Activated naive CD4-positive, alpha-beta T cell treated with anti-CD3 and anti-CD28 coated beads for 36 hours (primary cell): ENCODE measurements at regions of chr7 and their contacts with region 1.

Region 1: GRCh38 chr7:104883718-104884452 is 130.1 kb upstream of the KMT2E start:
- DNase-seq: peak; percentile 89
- H3K4me3 Mint-ChIP-seq: no peak overlapping the region
- H3K27ac Mint-ChIP-seq: no peak overlapping the region
- H3K4me1 Mint-ChIP-seq: peaks cover 9% of the 10 kb centered on the region
- H3K27me3 Mint-ChIP-seq: no peaks in the 10 kb centered on the region

Region 2: GRCh38 chr7:104552102-104552501 is 331.8 kb before region 1 on chr7:
- CTCF ChIA-PET with region 1: no interaction called
- intact Hi-C with region 1: no loop called
- DNase-seq: peak; percentile 60
- H3K4me3 Mint-ChIP-seq: no peak overlapping the region
- H3K27ac Mint-ChIP-seq: no peak overlapping the region
- H3K4me1 Mint-ChIP-seq: no peaks in the 10 kb centered on the region
- H3K27me3 Mint-ChIP-seq: peaks cover 1% of the 10 kb centered on the region

Region 3: DNA sequence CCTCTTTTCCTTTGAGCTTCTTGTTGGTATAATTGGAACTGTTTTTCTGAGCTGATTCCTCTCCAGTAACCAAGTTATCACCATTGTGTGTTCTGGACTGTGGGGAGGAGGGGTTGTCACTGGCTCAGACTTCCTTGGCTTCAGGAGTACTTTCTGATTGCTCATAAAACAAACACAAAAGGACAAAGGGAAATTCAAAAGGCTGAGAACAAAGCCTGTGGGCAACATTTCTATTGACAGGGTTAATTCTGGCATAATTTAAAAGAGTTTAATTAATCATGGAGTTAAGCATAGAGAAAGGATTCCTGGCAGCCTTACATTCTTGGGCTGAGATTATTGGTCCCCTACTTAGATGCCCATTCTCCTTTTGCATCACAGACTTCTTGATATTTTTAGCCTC is 92.8 kb before region 1 on chr7:
- CTCF ChIA-PET with region 1: no interaction called
- intact Hi-C with region 1: no loop called
- DNase-seq: no peak
- H3K4me3 Mint-ChIP-seq: no peak overlapping the region
- H3K27ac Mint-ChIP-seq: no peak overlapping the region
- H3K4me1 Mint-ChIP-seq: no peaks in the 10 kb centered on the region
- H3K27me3 Mint-ChIP-seq: peaks cover 15% of the 10 kb centered on the region

Region 4: DNA sequence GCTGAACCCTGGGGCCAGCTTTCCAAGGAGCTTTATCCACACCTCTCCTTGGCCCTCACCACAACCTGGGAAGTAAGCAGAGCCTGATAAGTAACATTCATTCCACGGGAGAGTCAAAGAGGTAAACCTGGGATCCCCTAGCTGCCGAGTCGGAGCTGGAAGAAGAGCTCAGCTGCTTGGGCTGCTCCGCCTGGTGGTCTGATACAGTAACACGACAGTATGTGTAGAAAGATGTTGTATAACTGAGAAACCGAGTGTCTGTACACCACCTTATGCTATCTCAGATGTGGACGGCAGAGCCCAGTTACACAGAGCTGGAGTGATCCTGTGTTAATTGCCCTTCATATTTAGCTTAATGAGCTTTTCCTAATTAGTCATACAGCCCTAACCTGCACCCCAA is 21.2 kb before region 1 on chr7:
- CTCF ChIA-PET with region 1: interaction called, 18 read pairs
- intact Hi-C with region 1: no loop called
- DNase-seq: no peak
- H3K4me3 Mint-ChIP-seq: no peak overlapping the region
- H3K27ac Mint-ChIP-seq: no peak overlapping the region
- H3K4me1 Mint-ChIP-seq: peaks cover 10% of the 10 kb centered on the region
- H3K27me3 Mint-ChIP-seq: peaks cover 3% of the 10 kb centered on the region

Region 5: DNA sequence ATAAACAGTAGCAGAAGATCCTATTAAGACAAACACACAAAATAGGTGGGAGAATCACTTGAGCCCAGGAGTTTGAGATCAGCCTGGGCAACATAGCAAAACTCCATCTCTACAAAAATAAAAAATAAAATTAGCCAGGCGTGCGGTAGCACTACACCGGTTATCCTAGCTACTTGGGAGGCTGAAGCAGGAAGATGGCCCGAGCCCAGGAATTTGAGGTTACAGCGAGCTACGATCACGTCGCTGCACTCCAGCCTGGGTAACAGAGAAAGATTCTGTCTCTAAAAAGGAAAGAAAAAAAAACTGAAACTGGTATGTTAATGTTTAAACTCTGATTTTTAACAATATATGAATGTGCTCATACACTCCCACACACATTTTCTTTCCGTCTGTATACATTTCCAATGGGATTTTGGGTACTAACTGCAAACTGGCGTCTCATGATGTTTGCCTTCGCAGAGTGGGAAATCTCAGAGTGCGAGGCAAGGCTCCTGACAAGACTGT is 10.5 kb before region 1 on chr7:
- CTCF ChIA-PET with region 1: interaction called, 32 read pairs
- intact Hi-C with region 1: no loop called
- DNase-seq: no peak
- H3K4me3 Mint-ChIP-seq: no peak overlapping the region
- H3K27ac Mint-ChIP-seq: no peak overlapping the region
- H3K4me1 Mint-ChIP-seq: peaks cover 7% of the 10 kb centered on the region
- H3K27me3 Mint-ChIP-seq: no peaks in the 10 kb centered on the region

Region 6: DNA sequence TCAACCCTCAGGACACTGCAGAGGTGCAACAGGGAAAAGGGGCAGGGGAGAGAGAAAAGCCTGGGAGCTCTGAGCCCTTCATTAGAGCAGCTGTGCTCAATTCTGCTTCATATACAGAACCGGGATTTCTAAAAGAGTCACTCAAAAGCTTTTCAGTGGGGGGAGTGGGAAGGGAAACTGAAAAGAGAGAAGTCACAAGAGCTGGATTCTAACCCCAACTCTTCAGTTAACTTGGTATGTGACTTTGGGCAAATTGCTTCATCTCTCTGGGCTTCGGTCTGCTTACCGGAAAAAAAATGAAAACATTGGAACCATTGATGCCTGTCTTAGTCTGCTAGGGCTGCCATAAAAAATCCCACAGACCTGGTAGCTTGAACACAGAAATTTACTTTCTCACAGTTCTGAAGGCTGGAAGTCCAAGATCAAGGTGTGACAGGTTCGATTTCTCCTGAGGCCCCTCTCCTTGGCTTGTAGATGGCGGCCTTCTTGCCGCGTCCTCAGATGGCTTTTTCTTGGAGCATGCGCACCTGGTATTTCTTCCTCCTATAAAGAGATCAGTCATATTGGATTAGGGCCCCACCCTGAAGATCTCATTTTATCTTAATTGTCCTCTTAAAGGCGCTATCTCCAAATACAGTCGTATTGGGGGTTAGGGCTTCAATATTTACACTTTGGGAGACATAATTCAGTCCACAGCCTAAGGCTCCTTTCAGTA is 11.8 kb after region 1 on chr7:
- CTCF ChIA-PET with region 1: interaction called, 39 read pairs
- intact Hi-C with region 1: no loop called
- DNase-seq: no peak
- H3K4me3 Mint-ChIP-seq: no peak overlapping the region
- H3K27ac Mint-ChIP-seq: no peak overlapping the region
- H3K4me1 Mint-ChIP-seq: peaks cover 4% of the 10 kb centered on the region
- H3K27me3 Mint-ChIP-seq: no peaks in the 10 kb centered on the region

Region 7: DNA sequence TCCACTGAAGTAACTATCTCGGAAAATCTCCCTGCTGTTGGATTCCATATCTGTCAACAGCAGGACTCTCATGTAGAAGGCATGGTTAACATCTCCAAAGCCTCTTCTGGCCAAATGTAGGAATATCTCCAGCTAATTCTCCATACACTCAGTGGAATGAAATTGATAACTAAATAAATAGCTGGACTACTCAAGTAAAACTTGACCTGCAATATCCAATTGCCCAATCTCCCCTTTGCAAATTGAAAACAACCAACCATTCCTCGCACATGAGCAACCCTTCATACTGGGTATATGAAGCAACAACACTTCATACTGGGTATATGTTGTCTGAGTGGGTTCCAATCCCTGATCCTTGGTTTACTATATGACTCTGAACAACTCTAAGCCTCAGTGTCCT is 24.8 kb after region 1 on chr7:
- CTCF ChIA-PET with region 1: interaction called, 123 read pairs
- intact Hi-C with region 1: no loop called
- DNase-seq: no peak
- H3K4me3 Mint-ChIP-seq: no peak overlapping the region
- H3K27ac Mint-ChIP-seq: no peak overlapping the region
- H3K4me1 Mint-ChIP-seq: no peaks in the 10 kb centered on the region
- H3K27me3 Mint-ChIP-seq: no peaks in the 10 kb centered on the region

Region 8: GRCh38 chr7:104914421-104914820 is 30.5 kb after region 1 on chr7:
- CTCF ChIA-PET with region 1: interaction called, 123 read pairs
- intact Hi-C with region 1: loop called (anchors 1 kb)
- DNase-seq: no peak
- H3K4me3 Mint-ChIP-seq: no peak overlapping the region
- H3K27ac Mint-ChIP-seq: no peak overlapping the region
- H3K4me1 Mint-ChIP-seq: no peaks in the 10 kb centered on the region
- H3K27me3 Mint-ChIP-seq: no peaks in the 10 kb centered on the region

Region 9: DNA sequence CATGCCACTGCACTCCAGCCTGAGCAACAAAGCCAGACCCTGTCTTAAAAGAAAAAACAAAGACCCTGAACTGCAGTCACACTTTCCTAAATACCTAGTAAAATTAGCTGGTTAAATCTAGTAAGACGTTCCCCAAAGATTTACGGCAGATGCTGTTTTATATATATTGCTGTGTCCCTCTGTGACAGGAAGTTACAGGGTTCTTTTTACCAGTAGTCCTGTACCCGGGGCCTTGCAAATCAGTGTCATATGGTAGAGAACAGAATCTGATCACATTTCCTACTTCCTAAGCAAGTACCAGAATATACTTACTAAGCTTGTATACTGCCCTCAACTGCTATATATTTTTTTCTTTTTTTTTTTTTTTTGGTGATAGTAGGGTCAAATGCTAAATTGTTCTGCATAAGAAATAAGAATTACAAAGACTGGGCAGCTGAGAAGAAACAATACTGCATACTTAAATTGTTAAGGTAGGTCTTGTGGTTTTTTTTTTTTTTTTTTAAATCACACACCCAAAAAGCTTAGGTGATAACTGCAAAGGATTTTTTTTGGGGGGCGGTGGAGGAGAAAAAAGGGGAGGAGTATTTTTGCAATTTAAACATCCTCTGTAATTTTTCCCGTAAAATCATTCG is 102.9 kb after region 1 on chr7:
- CTCF ChIA-PET with region 1: no interaction called
- intact Hi-C with region 1: no loop called
- DNase-seq: no peak
- H3K4me3 Mint-ChIP-seq: no peak overlapping the region
- H3K27ac Mint-ChIP-seq: no peak overlapping the region
- H3K4me1 Mint-ChIP-seq: peaks cover 54% of the 10 kb centered on the region
- H3K27me3 Mint-ChIP-seq: no peaks in the 10 kb centered on the region

Region 10: GRCh38 chr7:105589356-105590077 is 705.6 kb after region 1 on chr7:
- CTCF ChIA-PET with region 1: interaction called, 4 read pairs
- intact Hi-C with region 1: loop called (anchors 5 kb)
- DNase-seq: peak; percentile 82
- H3K4me3 Mint-ChIP-seq: no peak overlapping the region
- H3K27ac Mint-ChIP-seq: no peak overlapping the region
- H3K4me1 Mint-ChIP-seq: peaks cover 4% of the 10 kb centered on the region
- H3K27me3 Mint-ChIP-seq: no peaks in the 10 kb centered on the region